ENCODE measurements at regions of chr1 and their contacts with region 1.

Region 1: GRCh38 chr1:50332941-50333594 is 90.2 kb downstream of the DMRTA2 start:
- DNase-seq: peak; percentile 46 to 56
- ATAC-seq: peak; percentile 90 to 97
- H3K4me3 ChIP-seq: peak overlapping the region; percentile 53
- H3K27ac ChIP-seq: peak overlapping the region; percentile 39 to 79; a peak in 4 of 6 replicates
- H3K4me1 ChIP-seq: no peaks in the 10 kb centered on the region
- CTCF ChIP-seq: peak; percentile 65
- EP300 ChIP-seq: no peak
- POLR2A ChIP-seq: no peak
- RAD21 ChIP-seq: peak; percentile 54 to 80

Region 2: DNA sequence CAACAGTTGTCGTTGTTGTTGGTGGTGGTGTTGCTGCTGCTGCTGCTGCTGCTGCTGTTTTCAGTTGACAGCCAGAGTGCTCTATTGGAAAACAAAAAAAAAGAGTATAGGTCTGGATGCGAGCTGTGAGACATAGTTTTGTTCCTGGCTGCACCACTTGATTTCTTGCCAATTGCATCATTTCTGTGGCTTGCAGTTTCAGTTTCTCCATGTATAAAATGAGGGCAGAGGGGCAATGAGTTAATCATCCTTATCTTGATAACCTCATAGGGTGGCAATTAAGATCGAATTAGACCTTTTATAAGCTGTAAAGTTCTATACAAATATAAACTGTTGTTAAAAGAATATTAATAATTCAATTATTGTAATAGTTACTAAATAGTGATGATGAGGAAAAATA is 66.6 kb before region 1 on chr1:
- CTCF ChIA-PET with region 1: no interaction called
- POLR2A ChIA-PET with region 1: no interaction called
- DNase-seq: no peak
- ATAC-seq: no peak
- H3K4me3 ChIP-seq: no peak overlapping the region
- H3K27ac ChIP-seq: no peak overlapping the region
- H3K4me1 ChIP-seq: no peaks in the 10 kb centered on the region
- CTCF ChIP-seq: no peak
- EP300 ChIP-seq: no peak
- POLR2A ChIP-seq: no peak
- RAD21 ChIP-seq: no peak

Region 3: GRCh38 chr1:50322579-50322978 is 10.5 kb before region 1 on chr1:
- CTCF ChIA-PET with region 1: interaction called, 24 read pairs
- POLR2A ChIA-PET with region 1: no interaction called
- DNase-seq: no peak
- ATAC-seq: no peak
- H3K4me3 ChIP-seq: no peak overlapping the region
- H3K27ac ChIP-seq: no peak overlapping the region
- H3K4me1 ChIP-seq: no peaks in the 10 kb centered on the region
- CTCF ChIP-seq: no peak
- EP300 ChIP-seq: no peak
- POLR2A ChIP-seq: no peak
- RAD21 ChIP-seq: no peak

Region 4: GRCh38 chr1:50343323-50343722 is 10.3 kb after region 1 on chr1:
- CTCF ChIA-PET with region 1: interaction called, 23 read pairs
- POLR2A ChIA-PET with region 1: no interaction called
- DNase-seq: no peak
- ATAC-seq: no peak
- H3K4me3 ChIP-seq: no peak overlapping the region
- H3K27ac ChIP-seq: no peak overlapping the region
- H3K4me1 ChIP-seq: no peaks in the 10 kb centered on the region
- CTCF ChIP-seq: no peak
- EP300 ChIP-seq: no peak
- POLR2A ChIP-seq: no peak
- RAD21 ChIP-seq: no peak

Region 5: GRCh38 chr1:50348449-50349241 is 15.6 kb after region 1 on chr1:
- CTCF ChIA-PET with region 1: interaction called, 23 read pairs
- POLR2A ChIA-PET with region 1: no interaction called
- DNase-seq: peak; percentile 56 to 57
- ATAC-seq: peak; percentile 83 to 93
- H3K4me3 ChIP-seq: no peak overlapping the region
- H3K27ac ChIP-seq: no peak overlapping the region
- H3K4me1 ChIP-seq: no peaks in the 10 kb centered on the region
- CTCF ChIP-seq: peak; percentile 63
- EP300 ChIP-seq: no peak
- POLR2A ChIP-seq: no peak
- RAD21 ChIP-seq: peak; percentile 75 to 76

Measured in A549 (cell line).